ENCODE measurements at regions of chr5 and their contacts with region 1.

Region 1: DNA sequence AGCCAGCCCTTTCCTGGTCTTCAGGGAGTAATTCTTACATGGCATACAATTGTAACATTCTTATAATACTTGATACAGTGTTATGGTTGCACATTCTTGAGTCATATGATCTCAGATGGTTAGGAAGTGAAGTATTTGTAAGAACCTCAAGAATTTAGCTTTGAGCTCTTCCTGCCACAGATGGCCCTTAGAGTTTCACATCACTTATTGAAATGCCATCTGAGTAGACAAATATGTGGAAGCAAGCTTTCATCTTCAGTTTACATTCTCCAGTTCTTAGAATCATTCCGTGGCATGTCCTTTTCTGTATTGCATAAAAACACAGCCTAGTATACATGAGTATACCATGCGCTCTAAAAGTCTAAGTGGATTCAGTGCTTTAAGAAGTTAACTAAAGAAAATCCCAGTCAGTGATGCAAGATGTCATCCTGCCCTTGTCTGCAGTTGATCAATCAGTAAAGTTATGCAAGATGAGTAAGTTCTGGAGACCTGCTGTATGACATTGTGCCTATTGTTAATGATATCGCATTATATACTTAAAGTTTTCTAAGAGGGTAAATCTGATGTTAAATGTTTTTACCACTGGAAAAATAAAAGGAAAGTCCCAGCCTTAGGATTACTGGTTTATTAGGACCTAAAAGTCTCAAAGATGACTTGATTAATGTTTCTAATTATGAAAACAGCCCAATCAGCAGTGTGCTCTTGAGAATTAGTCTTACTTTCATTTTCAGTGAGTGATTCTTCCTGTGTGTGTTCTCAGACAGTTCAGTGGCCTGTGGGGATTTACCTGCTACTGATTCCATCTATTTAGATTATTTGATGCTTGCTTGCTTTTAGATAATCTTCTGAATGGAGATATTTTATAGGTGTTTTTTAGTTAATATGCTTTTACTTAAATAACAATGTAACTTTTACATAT is 29.4 kb downstream of the RHOBTB3 start:
- DNase-seq: peak; percentile 71
- H3K4me3 ChIP-seq: peak overlapping the region; percentile 62
- H3K27ac ChIP-seq: peak overlapping the region; percentile 72
- H3K4me1 ChIP-seq: peaks cover 32% of the 10 kb centered on the region
- CTCF ChIP-seq: no peak

Region 2: GRCh38 chr5:95554647-95555548 is 205.6 kb before region 1 on chr5 and contains the starts of genes ARSK and SKIC3:
- CTCF ChIA-PET with region 1: no interaction called
- POLR2A ChIA-PET with region 1: no interaction called
- intact Hi-C with region 1: loop called (anchors 5 kb)
- DNase-seq: peak; percentile 99
- H3K4me3 ChIP-seq: peak within 1 kb of the TSS; percentile 81
- H3K27ac ChIP-seq: peak within 1 kb of the TSS; percentile 71
- H3K4me1 ChIP-seq: peaks cover 15% of the 10 kb centered on the region
- CTCF ChIP-seq: 0 out of 2 replicates have a peak, but pooled peaks have one; percentile 30
- total RNA-seq, gene ARSK: 4.1 and 5.9 TPM in 2 replicates
- total RNA-seq, gene SKIC3: 53.0 and 55.4 TPM in 2 replicates